Ovary (tissue), 10 donors: ENCODE measurements at regions of chr6 and their contacts with region 1.

Region 1: DNA sequence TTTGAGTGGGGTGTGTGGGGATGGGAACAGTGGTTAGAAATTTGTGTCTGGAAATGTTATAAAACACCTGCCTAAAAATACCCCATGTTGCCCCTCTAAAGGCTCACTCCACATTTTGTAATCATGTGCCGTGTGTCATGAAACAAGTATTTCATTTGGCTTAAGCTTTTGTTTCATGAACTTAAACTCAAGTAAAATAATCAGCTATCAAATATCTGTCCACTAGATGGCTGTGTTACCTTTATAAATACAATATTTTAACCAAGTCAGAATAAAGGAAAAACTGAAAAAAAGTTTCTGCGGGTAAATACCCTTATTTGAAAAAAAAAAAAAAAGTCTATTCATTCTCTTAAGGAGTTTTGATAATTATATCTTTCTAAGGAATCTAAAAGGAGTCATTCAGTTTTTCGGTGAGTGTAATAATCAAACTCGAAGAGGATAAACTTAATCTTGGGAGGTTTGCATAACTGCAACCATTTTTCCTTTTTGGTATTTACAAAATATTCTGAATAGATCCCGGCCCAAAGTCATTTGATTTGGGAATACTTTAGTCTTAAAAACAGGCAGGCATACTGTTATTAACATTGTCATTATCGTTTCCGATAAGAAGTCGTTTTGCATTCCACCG is 29.9 kb upstream of the MTRF1L start:
- DNase-seq: no peak
- H3K4me3 ChIP-seq: no peak overlapping the region
- H3K27ac ChIP-seq: no peak overlapping the region
- H3K4me1 ChIP-seq: no peaks in the 10 kb centered on the region
- H3K27me3 ChIP-seq: no peaks in the 10 kb centered on the region
- CTCF ChIP-seq: peak in 1 of 3 donors; percentile 18
- EP300 ChIP-seq: no peak
- POLR2A ChIP-seq: no peak

Region 2: GRCh38 chr6:153511896-153512496 is 479.6 kb after region 1 on chr6:
- intact Hi-C with region 1: loop called in 1 of 4 experiments (anchors 10 kb)
- DNase-seq: no peak
- H3K4me3 ChIP-seq: no peak overlapping the region
- H3K27ac ChIP-seq: no peak overlapping the region
- H3K4me1 ChIP-seq: no peaks in the 10 kb centered on the region
- H3K27me3 ChIP-seq: no peaks in the 10 kb centered on the region
- CTCF ChIP-seq: no peak
- EP300 ChIP-seq: no peak
- POLR2A ChIP-seq: no peak